Mammary epithelial cell (primary cell): ENCODE measurements at regions of chr12 and their contacts with region 1.

Region 1: GRCh38 chr12:102300824-102301461 is 103.3 kb upstream of the PMCH start:
- DNase-seq: peak; percentile 63
- H3K4me3 ChIP-seq: no peak overlapping the region
- H3K27ac ChIP-seq: no peak overlapping the region
- H3K4me1 ChIP-seq: no peaks in the 10 kb centered on the region
- H3K27me3 ChIP-seq: no peaks in the 10 kb centered on the region
- CTCF ChIP-seq: peak; percentile 57 to 62

Region 2: GRCh38 chr12:101799774-101800173 is 501.2 kb before region 1 on chr12:
- CTCF ChIA-PET with region 1: no interaction called
- dilution Hi-C with region 1: no loop called
- in situ Hi-C with region 1: no loop called
- intact Hi-C with region 1: no loop called
- DNase-seq: no peak
- H3K4me3 ChIP-seq: no peak overlapping the region
- H3K27ac ChIP-seq: no peak overlapping the region
- H3K4me1 ChIP-seq: peaks cover 5% of the 10 kb centered on the region
- H3K27me3 ChIP-seq: no peaks in the 10 kb centered on the region
- CTCF ChIP-seq: no peak

Region 3: DNA sequence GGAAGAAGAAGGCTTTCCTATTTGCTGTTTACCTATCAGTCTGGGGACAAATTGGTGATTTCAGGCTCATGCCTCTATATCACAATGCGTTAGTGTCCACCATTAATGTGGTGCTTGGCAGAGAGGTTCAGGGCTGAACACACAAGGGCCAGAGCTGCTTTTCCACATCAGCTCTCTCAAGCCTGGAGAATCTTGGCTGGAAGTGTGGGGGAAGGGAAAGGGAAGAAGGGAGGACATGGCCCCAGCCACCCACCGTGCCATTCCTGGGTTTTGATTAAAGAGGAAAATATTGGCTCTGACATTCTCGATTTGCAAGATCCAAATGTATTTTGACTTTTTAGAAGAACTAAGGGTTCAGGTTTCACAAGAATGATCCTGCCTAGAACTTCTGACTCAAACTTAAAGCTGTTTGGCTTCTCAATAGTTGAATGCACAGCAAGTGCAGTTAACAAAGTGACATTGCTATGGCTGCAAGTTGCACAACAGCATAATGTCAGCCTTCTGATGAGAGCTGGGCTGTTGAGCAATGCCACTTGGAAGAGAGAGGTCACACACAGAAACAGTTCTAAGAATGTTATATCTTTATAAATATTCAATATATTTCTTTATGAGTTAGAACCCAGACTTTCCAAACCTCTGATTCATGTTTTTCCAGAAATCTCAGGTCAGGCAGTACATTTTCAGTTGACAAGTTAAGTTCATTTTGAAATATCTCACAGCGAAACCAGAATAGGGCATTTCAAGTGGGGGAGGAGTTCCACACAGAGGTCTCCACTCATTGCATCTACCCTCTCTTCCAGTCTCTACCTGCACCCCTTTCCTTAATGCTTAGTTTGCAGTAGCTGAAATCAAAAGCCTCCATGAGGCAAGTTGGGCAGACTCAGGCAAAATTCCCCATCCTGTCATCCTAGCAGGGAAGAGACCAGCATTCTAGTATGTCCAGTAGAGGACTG is 154.1 kb after region 1 on chr12:
- CTCF ChIA-PET with region 1: no interaction called
- dilution Hi-C with region 1: no loop called
- in situ Hi-C with region 1: no loop called
- intact Hi-C with region 1: no loop called
- DNase-seq: no peak
- H3K4me3 ChIP-seq: no peak overlapping the region
- H3K27ac ChIP-seq: no peak overlapping the region
- H3K4me1 ChIP-seq: no peaks in the 10 kb centered on the region
- H3K27me3 ChIP-seq: no peaks in the 10 kb centered on the region
- CTCF ChIP-seq: no peak

Region 4: DNA sequence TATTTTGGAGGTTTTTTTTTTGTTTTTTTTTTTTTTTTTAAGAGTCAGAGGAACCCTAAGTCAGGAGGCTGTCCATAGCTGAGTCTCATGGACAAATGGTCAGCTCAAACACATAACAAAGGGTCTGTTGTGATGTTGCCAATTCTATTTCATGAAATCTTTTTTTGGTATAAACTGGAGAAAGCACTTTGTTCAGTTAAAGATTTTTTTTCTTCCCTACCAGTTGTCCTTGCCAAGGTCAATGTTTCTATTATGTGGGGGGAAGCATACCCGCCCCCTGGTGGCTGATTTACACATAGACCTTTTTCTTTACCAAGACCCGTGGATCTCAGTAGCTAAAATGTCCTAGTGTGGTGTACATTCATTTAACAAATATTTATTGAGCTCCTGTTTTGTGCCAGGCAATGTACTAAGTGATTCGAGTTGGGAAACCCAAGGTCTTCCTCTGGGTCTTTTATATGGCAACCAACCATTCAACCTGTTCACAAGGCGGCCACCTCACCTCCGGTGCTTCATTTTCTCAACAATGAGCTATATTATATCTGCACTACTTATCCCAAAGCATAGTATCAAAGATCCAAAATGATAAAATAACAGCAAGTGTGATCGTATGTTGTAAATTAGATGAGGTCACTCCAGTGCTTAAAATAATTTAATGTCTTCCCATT is 401.6 kb after region 1 on chr12:
- CTCF ChIA-PET with region 1: interaction called, 4 read pairs
- dilution Hi-C with region 1: no loop called
- in situ Hi-C with region 1: no loop called
- intact Hi-C with region 1: loop called (anchors 5 kb)
- DNase-seq: peak; percentile 20
- H3K4me3 ChIP-seq: no peak overlapping the region
- H3K27ac ChIP-seq: no peak overlapping the region
- H3K4me1 ChIP-seq: no peaks in the 10 kb centered on the region
- H3K27me3 ChIP-seq: no peaks in the 10 kb centered on the region
- CTCF ChIP-seq: peak; percentile 41 to 52